ENCODE measurements at regions of chr19 and their contacts with region 1.

Region 1: GRCh38 chr19:49929611-49930482 is 543 bp upstream of the NUP62 start:
- DNase-seq: peak; percentile 96
- H3K4me3 ChIP-seq: peak overlapping the region; percentile 79
- H3K27ac ChIP-seq: peak overlapping the region; percentile 100
- H3K4me1 ChIP-seq: peaks cover 35% of the 10 kb centered on the region
- H3K27me3 ChIP-seq: no peaks in the 10 kb centered on the region
- CTCF ChIP-seq: no peak

Region 2: DNA sequence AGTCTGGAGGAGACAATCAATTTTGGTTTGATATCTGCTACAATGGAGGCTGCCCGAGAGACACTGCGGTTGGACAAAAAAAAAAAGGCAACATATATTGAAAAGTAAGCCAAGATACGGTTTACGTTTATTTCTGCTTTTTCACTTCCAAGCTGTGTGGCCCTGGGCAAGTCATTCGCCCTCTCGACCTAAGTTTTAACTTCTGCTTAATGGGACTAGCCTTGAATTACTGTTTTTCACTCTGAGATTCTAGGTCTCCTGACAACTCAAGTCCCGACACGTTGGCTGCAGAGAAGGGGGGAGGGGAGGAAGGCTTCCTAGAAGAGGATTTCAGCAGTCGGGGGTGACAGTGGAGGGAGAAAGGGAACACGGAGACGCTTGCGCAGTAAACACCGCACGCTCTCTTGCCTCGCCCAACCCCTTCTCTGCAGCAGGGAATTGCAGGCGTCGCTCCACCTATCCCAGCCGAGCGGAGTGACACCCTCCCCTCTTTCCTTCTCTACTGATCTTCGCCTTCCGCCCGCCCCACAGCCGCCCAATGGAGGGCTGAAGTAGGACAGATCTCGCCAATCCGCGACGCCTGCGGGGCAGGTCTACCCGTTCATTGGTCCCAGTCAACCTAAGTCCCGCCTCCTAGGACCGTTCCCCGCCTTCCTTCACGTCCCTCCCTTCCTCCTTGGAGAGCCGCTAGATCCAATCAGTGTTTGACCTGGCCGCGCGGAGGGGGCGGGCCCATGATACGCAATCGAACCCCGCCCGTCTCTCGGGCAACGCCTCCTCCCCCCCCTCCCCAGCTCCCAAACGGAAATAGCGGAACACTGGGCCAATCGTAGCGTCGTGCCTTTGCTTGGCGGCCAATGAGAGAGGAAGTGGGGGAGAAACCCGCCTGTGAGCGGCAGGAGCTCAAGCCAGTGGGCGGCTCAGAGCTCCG is 163.6 kb before region 1 on chr19:
- CTCF ChIA-PET with region 1: no interaction called
- POLR2A ChIA-PET with region 1: interaction called, 7 read pairs
- intact Hi-C with region 1: loop called (anchors 10 kb)
- DNase-seq: peak; percentile 100
- H3K4me3 ChIP-seq: peak overlapping the region; percentile 99
- H3K27ac ChIP-seq: peak overlapping the region; percentile 95
- H3K4me1 ChIP-seq: peaks cover 15% of the 10 kb centered on the region
- H3K27me3 ChIP-seq: no peaks in the 10 kb centered on the region
- CTCF ChIP-seq: no peak

Region 3: DNA sequence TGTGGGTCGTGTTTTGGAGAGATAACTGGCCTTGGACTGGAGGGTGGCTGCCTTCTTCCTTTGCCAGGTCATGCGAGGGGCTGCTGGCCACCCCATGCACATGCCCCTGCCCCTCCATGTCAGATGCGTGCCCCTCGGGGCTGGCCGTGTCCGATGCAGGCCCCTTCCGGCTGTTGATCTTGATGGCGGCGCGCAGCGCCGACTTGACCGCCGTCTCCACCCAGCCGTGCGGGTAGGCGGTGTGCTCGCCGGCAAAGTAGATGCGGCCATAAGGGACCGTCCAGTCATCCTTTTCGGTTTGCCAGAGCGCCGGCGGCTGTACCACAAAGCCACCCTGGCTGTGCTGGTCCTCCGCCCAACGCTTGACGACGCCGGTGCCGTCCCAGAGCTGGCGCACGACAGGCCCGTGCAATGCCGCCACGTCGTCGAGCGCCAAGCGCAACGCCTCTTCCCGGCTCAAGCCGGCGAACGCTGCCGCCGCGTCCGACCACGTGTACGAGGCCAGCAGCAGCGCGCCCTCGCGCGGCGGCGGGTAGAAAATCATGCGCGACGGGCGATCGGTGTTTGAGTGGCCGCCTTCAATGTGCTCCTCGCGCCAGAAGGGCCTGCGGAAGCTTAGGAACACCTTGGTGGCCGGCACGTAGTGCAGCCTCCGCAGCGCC is 40.0 kb before region 1 on chr19:
- CTCF ChIA-PET with region 1: no interaction called
- POLR2A ChIA-PET with region 1: interaction called, 12 read pairs
- intact Hi-C with region 1: no loop called
- DNase-seq: peak; percentile 85
- H3K4me3 ChIP-seq: peak overlapping the region; percentile 20
- H3K27ac ChIP-seq: no peak overlapping the region
- H3K4me1 ChIP-seq: no peaks in the 10 kb centered on the region
- H3K27me3 ChIP-seq: no peaks in the 10 kb centered on the region
- CTCF ChIP-seq: peak; percentile 88

Measured in A673 (cell line).